H1 (cell line): ENCODE measurements at regions of chr6 and their contacts with region 1.

Region 1: GRCh38 chr6:73515204-73515655 is 5.6 kb downstream of the EEF1A1 start:
- DNase-seq: no peak
- H3K4me3 ChIP-seq: no peak overlapping the region
- H3K27ac ChIP-seq: no peak overlapping the region
- H3K4me1 ChIP-seq: peaks cover 0 to 3% (median 3%) of the 10 kb centered on the region in 4 experiments; a peak in 4 of 7 replicates
- H3K27me3 ChIP-seq: no peaks in the 10 kb centered on the region
- CTCF ChIP-seq: no peak
- EP300 ChIP-seq: no peak
- POLR2A ChIP-seq: peak; percentile 81 to 93
- RAD21 ChIP-seq: no peak

Region 2: DNA sequence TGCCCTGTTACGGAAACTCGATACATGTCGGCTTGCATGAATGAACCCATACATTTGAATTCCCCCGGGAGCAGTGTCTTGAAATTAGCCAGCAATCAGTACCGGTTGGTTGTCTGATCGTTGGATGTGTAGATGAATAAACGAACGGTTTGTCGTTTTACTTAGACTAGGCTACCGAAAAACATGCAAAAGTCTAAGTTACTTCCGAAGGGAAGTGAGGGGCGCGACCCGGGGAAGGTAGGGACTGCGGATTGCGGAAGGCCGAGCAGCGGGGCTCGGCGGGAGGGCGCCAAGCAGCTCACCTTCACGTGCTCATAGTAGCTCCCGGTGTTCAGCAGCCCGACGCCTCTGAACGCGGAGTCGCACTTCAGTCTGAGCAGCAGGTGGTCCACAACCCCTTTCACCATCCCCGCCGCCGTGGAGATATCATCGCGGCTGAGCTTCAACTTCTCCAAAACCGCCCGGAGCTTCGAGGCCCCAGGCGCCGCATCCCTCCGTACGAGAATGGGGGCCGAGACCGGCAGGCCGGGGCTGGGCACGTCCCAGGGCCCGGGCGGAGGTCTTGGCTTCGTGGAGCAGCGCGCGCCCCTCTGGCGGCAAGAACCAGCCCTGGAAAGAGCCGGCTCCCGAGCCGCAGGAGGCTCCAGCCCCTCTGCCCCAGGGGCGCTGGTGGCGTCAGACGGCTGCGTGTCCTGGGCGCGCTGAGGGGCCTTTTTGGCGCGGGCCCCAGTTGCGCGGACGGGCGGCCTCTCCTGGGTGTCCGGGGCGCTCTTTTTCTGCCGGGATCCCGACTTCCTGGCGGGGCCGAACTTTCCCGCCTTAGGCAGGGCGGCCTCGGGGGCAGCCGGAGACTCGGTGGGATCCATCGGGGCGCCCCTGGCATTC is 63.8 kb before region 1 on chr6:
- CTCF ChIA-PET with region 1: interaction called, 3 read pairs
- POLR2A ChIA-PET with region 1: interaction called, 17 read pairs
- DNase-seq: peak; percentile 39 to 73
- H3K4me3 ChIP-seq: peak overlapping the region; percentile 51 to 82 (median 62)
- H3K27ac ChIP-seq: no peak overlapping the region; the same call in 1 of the 2 replicates
- H3K4me1 ChIP-seq: peaks cover 0 to 2% (median under 1%) of the 10 kb centered on the region in 4 experiments; a peak in 2 of 7 replicates
- H3K27me3 ChIP-seq: peaks cover 0 to 6% (median 3%) of the 10 kb centered on the region in 4 experiments; a peak in 4 of 7 replicates
- CTCF ChIP-seq: no peak
- EP300 ChIP-seq: no peak
- POLR2A ChIP-seq: peak in 1 of 2 experiments; percentile 35; a peak in 1 of 3 replicates
- RAD21 ChIP-seq: no peak

Region 3: GRCh38 chr6:73528897-73529296 is 13.7 kb after region 1 on chr6:
- CTCF ChIA-PET with region 1: interaction called, 3 read pairs
- POLR2A ChIA-PET with region 1: interaction called, 179 read pairs
- DNase-seq: no peak
- H3K4me3 ChIP-seq: no peak overlapping the region
- H3K27ac ChIP-seq: no peak overlapping the region
- H3K4me1 ChIP-seq: no peaks in the 10 kb centered on the region
- H3K27me3 ChIP-seq: no peaks in the 10 kb centered on the region
- CTCF ChIP-seq: no peak
- EP300 ChIP-seq: no peak
- POLR2A ChIP-seq: no peak
- RAD21 ChIP-seq: no peak

Region 4: DNA sequence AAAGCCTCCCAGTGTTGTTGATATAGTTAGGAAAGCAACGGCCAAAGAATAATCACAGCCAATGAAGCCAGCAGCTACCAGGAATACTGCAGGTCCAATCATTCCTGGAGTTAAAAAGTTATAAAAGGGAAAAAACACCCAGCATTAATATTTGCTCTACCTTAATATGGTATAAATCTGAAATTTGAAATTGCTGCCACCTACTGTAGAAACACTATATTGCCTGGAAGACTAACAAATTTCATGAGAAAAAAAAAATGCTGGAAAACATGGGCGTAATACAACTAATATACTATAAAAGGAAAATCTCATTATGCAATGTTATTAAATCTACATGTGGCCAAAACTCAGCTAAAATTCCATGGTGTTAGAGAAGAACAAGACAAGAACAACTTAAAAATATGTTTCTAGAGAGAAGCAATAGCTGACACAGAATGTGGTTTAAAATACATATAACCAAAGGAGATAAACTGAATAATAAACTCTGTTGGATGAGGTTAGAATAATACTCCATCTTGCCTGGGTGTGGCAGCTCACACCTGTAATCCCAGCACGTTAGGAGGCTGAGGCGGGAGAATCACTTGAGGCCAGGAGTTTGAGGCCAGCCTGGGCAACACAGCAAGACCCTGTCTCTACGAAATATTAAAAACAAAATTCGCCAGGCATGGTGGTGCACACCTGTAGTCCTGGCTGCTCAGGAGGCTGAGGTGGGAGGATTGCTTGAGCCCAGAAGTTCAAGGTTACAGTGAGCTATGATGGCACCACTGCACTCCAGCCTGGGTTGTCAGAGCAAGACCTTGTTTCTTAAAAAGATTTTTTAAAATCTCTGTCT is 95.4 kb after region 1 on chr6:
- CTCF ChIA-PET with region 1: interaction called, 35 read pairs
- POLR2A ChIA-PET with region 1: interaction called, 430 read pairs
- DNase-seq: no peak
- H3K4me3 ChIP-seq: no peak overlapping the region
- H3K27ac ChIP-seq: no peak overlapping the region
- H3K4me1 ChIP-seq: no peaks in the 10 kb centered on the region
- H3K27me3 ChIP-seq: no peaks in the 10 kb centered on the region
- CTCF ChIP-seq: peak in 2 of 3 experiments; percentile 1 to 35; a peak in 2 of 4 replicates
- EP300 ChIP-seq: no peak
- POLR2A ChIP-seq: no peak
- RAD21 ChIP-seq: peak; percentile 55 to 60

Region 5: GRCh38 chr6:73644941-73645591 is 129.8 kb after region 1 on chr6:
- CTCF ChIA-PET with region 1: interaction called, 3 read pairs
- POLR2A ChIA-PET with region 1: interaction called, 32 read pairs
- DNase-seq: no peak
- H3K4me3 ChIP-seq: peak overlapping the region in 2 of 4 experiments; percentile 11 to 49; a peak in 3 of 8 replicates
- H3K27ac ChIP-seq: no peak overlapping the region
- H3K4me1 ChIP-seq: no peaks in the 10 kb centered on the region
- H3K27me3 ChIP-seq: no peaks in the 10 kb centered on the region
- CTCF ChIP-seq: no peak
- EP300 ChIP-seq: no peak
- POLR2A ChIP-seq: no peak
- RAD21 ChIP-seq: no peak

Region 6: GRCh38 chr6:73722318-73723060 is 207.3 kb after region 1 on chr6:
- CTCF ChIA-PET with region 1: no interaction called
- POLR2A ChIA-PET with region 1: no interaction called
- DNase-seq: no peak
- H3K4me3 ChIP-seq: no peak overlapping the region
- H3K27ac ChIP-seq: no peak overlapping the region
- H3K4me1 ChIP-seq: no peaks in the 10 kb centered on the region
- H3K27me3 ChIP-seq: no peaks in the 10 kb centered on the region
- CTCF ChIP-seq: no peak
- EP300 ChIP-seq: no peak
- POLR2A ChIP-seq: no peak
- RAD21 ChIP-seq: no peak

Region 7: GRCh38 chr6:73774311-73774787 is 259.1 kb after region 1 on chr6:
- CTCF ChIA-PET with region 1: no interaction called
- POLR2A ChIA-PET with region 1: no interaction called
- DNase-seq: no peak
- H3K4me3 ChIP-seq: no peak overlapping the region
- H3K27ac ChIP-seq: no peak overlapping the region
- H3K4me1 ChIP-seq: no peaks in the 10 kb centered on the region
- H3K27me3 ChIP-seq: no peaks in the 10 kb centered on the region
- CTCF ChIP-seq: no peak
- EP300 ChIP-seq: no peak
- POLR2A ChIP-seq: no peak
- RAD21 ChIP-seq: no peak